PC-9 (cell line): ENCODE measurements at regions of chr10 and their contacts with region 1.

Region 1: GRCh38 chr10:43892062-43892770 is 243.5 kb upstream of the ZNF32 start:
- DNase-seq: no peak
- H3K4me3 ChIP-seq: no peak overlapping the region
- H3K27ac ChIP-seq: no peak overlapping the region
- H3K4me1 ChIP-seq: no peaks in the 10 kb centered on the region
- H3K27me3 ChIP-seq: 0 out of 2 replicates have a peak, but pooled peaks cover 4% of the 10 kb centered on the region
- CTCF ChIP-seq: no peak

Region 2: GRCh38 chr10:43808136-43808535 is 84.1 kb before region 1 on chr10:
- CTCF ChIA-PET with region 1: no interaction called
- POLR2A ChIA-PET with region 1: no interaction called
- intact Hi-C with region 1: loop called (anchors 10 kb)
- DNase-seq: no peak
- H3K4me3 ChIP-seq: no peak overlapping the region
- H3K27ac ChIP-seq: no peak overlapping the region
- H3K4me1 ChIP-seq: no peaks in the 10 kb centered on the region
- H3K27me3 ChIP-seq: peaks cover 30% of the 10 kb centered on the region
- CTCF ChIP-seq: no peak

Region 3: GRCh38 chr10:43863859-43864591 is 28.2 kb before region 1 on chr10:
- CTCF ChIA-PET with region 1: no interaction called
- POLR2A ChIA-PET with region 1: no interaction called
- intact Hi-C with region 1: no loop called
- DNase-seq: peak; percentile 61 to 77
- H3K4me3 ChIP-seq: no peak overlapping the region
- H3K27ac ChIP-seq: no peak overlapping the region
- H3K4me1 ChIP-seq: no peaks in the 10 kb centered on the region
- H3K27me3 ChIP-seq: peaks cover 14% of the 10 kb centered on the region
- CTCF ChIP-seq: no peak

Region 4: GRCh38 chr10:44180321-44181168 is 288.3 kb after region 1 on chr10:
- CTCF ChIA-PET with region 1: no interaction called
- POLR2A ChIA-PET with region 1: no interaction called
- intact Hi-C with region 1: no loop called
- DNase-seq: no peak
- H3K4me3 ChIP-seq: no peak overlapping the region
- H3K27ac ChIP-seq: no peak overlapping the region
- H3K4me1 ChIP-seq: no peaks in the 10 kb centered on the region
- H3K27me3 ChIP-seq: peaks cover 44% of the 10 kb centered on the region; the same call in 1 of the 2 replicates
- CTCF ChIP-seq: no peak